BJ (cell line): ENCODE measurements at regions of chr6 and their contacts with region 1.

Region 1: GRCh38 chr6:138692058-138692977 is 81.3 kb upstream of the CCDC28A start:
- DNase-seq: no peak
- H3K4me3 ChIP-seq: peak overlapping the region; percentile 58
- H3K27me3 ChIP-seq: no peaks in the 10 kb centered on the region
- CTCF ChIP-seq: peak; percentile 53

Region 2: GRCh38 chr6:138428944-138429598 is 263.2 kb before region 1 on chr6:
- CTCF ChIA-PET with region 1: no interaction called
- POLR2A ChIA-PET with region 1: no interaction called
- DNase-seq: no peak
- H3K4me3 ChIP-seq: no peak overlapping the region
- H3K27me3 ChIP-seq: no peaks in the 10 kb centered on the region
- CTCF ChIP-seq: peak; percentile 66

Region 3: GRCh38 chr6:138673346-138674014 is 18.8 kb before region 1 on chr6:
- CTCF ChIA-PET with region 1: interaction called, 12 read pairs
- POLR2A ChIA-PET with region 1: interaction called, 7 read pairs
- DNase-seq: no peak
- H3K4me3 ChIP-seq: no peak overlapping the region
- H3K27me3 ChIP-seq: no peaks in the 10 kb centered on the region
- CTCF ChIP-seq: no peak

Region 4: GRCh38 chr6:138734585-138734984 is 42.3 kb after region 1 on chr6:
- CTCF ChIA-PET with region 1: no interaction called
- POLR2A ChIA-PET with region 1: no interaction called
- DNase-seq: no peak
- H3K4me3 ChIP-seq: no peak overlapping the region
- H3K27me3 ChIP-seq: no peaks in the 10 kb centered on the region
- CTCF ChIP-seq: no peak

Region 5: DNA sequence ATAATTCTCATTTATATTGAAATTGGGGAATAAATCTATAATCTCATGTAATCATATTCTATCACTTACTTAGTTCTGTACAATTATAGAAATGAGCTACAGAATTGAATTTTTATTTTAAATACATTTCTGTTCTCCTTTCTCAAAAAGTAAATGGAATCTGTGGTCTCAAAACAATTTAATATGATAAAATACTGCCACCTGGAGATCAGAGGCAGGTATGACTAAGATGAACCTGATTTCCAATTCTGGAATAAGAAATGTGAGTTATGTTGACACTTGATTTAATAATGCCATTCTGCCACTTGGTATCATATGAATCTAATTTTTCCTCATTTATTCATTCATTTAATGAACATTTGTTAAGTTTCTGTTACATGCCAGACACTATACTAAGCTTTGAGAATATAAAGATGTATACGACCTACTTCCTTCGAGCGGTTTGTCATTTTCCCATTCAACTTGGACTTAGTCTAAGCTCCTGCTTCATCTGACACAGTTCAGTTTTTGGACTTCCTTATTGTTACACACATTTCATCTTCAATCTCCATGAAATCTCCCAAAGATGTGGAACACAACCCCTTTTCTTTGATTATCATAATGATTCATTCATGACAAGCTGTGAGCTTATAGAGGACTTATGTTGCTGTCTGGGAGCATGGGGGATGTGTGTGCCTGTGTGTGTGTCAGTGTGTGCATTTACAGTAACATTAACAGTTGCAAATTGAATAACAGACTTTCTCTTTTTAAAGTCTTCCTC is 73.8 kb after region 1 on chr6:
- CTCF ChIA-PET with region 1: interaction called, 24 read pairs
- POLR2A ChIA-PET with region 1: no interaction called
- DNase-seq: peak; percentile 7
- H3K4me3 ChIP-seq: no peak overlapping the region
- H3K27me3 ChIP-seq: no peaks in the 10 kb centered on the region
- CTCF ChIP-seq: peak; percentile 53